ENCODE measurements at regions of chr2 and their contacts with region 1.

Region 1: DNA sequence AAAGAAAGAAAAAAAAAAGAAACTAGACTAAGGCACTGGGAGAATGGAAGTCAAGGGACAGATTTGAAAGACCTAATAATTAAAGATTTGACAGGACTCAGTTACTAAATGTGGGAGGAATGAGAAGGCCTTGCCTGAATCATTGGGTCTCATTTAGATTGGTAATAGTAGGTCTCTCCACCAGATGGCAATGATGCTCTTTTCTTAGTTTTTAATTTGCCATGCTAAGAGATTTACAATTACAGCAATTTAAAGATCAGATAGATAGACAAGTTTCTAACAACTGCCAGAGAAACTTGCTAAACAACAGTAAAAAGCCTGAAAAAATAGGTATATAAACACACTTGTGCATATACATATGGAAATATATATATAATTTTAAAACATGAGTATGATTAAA is 153.0 kb downstream of the TMEM247 start:
- H3K4me3 Mint-ChIP-seq: no peak overlapping the region
- H3K27ac Mint-ChIP-seq: no peak overlapping the region
- H3K4me1 Mint-ChIP-seq: peaks cover 11% of the 10 kb centered on the region
- H3K27me3 Mint-ChIP-seq: no peaks in the 10 kb centered on the region

Region 2: GRCh38 chr2:46615986-46616485 is 16.3 kb before region 1 on chr2:
- intact Hi-C with region 1: no loop called
- H3K4me3 Mint-ChIP-seq: peak overlapping the region; percentile 97
- H3K27ac Mint-ChIP-seq: peak overlapping the region; percentile 97
- H3K4me1 Mint-ChIP-seq: peaks cover 22% of the 10 kb centered on the region
- H3K27me3 Mint-ChIP-seq: no peaks in the 10 kb centered on the region

Region 3: GRCh38 chr2:46650556-46651001 is 18.2 kb after region 1 on chr2:
- intact Hi-C with region 1: loop called (anchors 2 kb)
- H3K4me3 Mint-ChIP-seq: no peak overlapping the region
- H3K27ac Mint-ChIP-seq: no peak overlapping the region
- H3K4me1 Mint-ChIP-seq: peaks cover 16% of the 10 kb centered on the region
- H3K27me3 Mint-ChIP-seq: peaks cover 5% of the 10 kb centered on the region

Region 4: GRCh38 chr2:46699934-46700256 is 67.5 kb after region 1 on chr2:
- intact Hi-C with region 1: no loop called
- H3K4me3 Mint-ChIP-seq: peak overlapping the region; percentile 91
- H3K27ac Mint-ChIP-seq: peak overlapping the region; percentile 96
- H3K4me1 Mint-ChIP-seq: peaks cover 41% of the 10 kb centered on the region
- H3K27me3 Mint-ChIP-seq: no peaks in the 10 kb centered on the region

Region 5: GRCh38 chr2:46776687-46777327 is 144.5 kb after region 1 on chr2:
- intact Hi-C with region 1: loop called (anchors 1 kb)
- H3K4me3 Mint-ChIP-seq: no peak overlapping the region
- H3K27ac Mint-ChIP-seq: no peak overlapping the region
- H3K4me1 Mint-ChIP-seq: no peaks in the 10 kb centered on the region
- H3K27me3 Mint-ChIP-seq: no peaks in the 10 kb centered on the region

Region 6: GRCh38 chr2:46887028-46887885 is 254.9 kb after region 1 on chr2:
- intact Hi-C with region 1: loop called (anchors 2 kb)
- H3K4me3 Mint-ChIP-seq: no peak overlapping the region
- H3K27ac Mint-ChIP-seq: no peak overlapping the region
- H3K4me1 Mint-ChIP-seq: peaks cover 6% of the 10 kb centered on the region
- H3K27me3 Mint-ChIP-seq: peaks cover 16% of the 10 kb centered on the region